Caco-2 (cell line): ENCODE measurements at regions of chr20 and their contacts with region 1.

Region 1: GRCh38 chr20:57596998-57597939 is 23.0 kb downstream of the ZBP1 start:
- DNase-seq: peak; percentile 73 to 91
- H3K4me3 ChIP-seq: no peak overlapping the region
- H3K4me3 Mint-ChIP-seq: no peak overlapping the region
- H3K27ac Mint-ChIP-seq: no peak overlapping the region
- H3K4me1 ChIP-seq: peaks cover 7% of the 10 kb centered on the region; the same call in 1 of the 2 replicates
- H3K4me1 Mint-ChIP-seq: no peaks in the 10 kb centered on the region
- H3K27me3 ChIP-seq: no peaks in the 10 kb centered on the region
- H3K27me3 Mint-ChIP-seq: peaks cover 8% of the 10 kb centered on the region
- CTCF ChIP-seq: peak; percentile 99 to 100

Region 2: GRCh38 chr20:57388953-57389694 is 208.1 kb before region 1 on chr20:
- CTCF ChIA-PET with region 1: no interaction called
- POLR2A ChIA-PET with region 1: no interaction called
- intact Hi-C with region 1: loop called (anchors 10 kb)
- DNase-seq: peak; percentile 94 to 98
- H3K4me3 ChIP-seq: peak overlapping the region; percentile 24
- H3K4me3 Mint-ChIP-seq: peak overlapping the region; percentile 82
- H3K27ac Mint-ChIP-seq: peak overlapping the region; percentile 87
- H3K4me1 ChIP-seq: peaks cover 23% of the 10 kb centered on the region
- H3K4me1 Mint-ChIP-seq: peaks cover 23% of the 10 kb centered on the region
- H3K27me3 ChIP-seq: no peaks in the 10 kb centered on the region
- H3K27me3 Mint-ChIP-seq: no peaks in the 10 kb centered on the region
- CTCF ChIP-seq: peak; percentile 31 to 45

Region 3: GRCh38 chr20:57498425-57499400 is 98.6 kb before region 1 on chr20:
- CTCF ChIA-PET with region 1: interaction called, 14 read pairs
- POLR2A ChIA-PET with region 1: no interaction called
- intact Hi-C with region 1: no loop called
- DNase-seq: peak in 1 of 2 experiments; percentile 65
- H3K4me3 ChIP-seq: no peak overlapping the region
- H3K4me3 Mint-ChIP-seq: no peak overlapping the region
- H3K27ac Mint-ChIP-seq: no peak overlapping the region
- H3K4me1 ChIP-seq: peaks cover 6% of the 10 kb centered on the region; the same call in 1 of the 2 replicates
- H3K4me1 Mint-ChIP-seq: peaks cover 19% of the 10 kb centered on the region
- H3K27me3 ChIP-seq: peaks cover 2% of the 10 kb centered on the region
- H3K27me3 Mint-ChIP-seq: peaks cover 17% of the 10 kb centered on the region
- CTCF ChIP-seq: peak; percentile 43 to 73

Region 4: DNA sequence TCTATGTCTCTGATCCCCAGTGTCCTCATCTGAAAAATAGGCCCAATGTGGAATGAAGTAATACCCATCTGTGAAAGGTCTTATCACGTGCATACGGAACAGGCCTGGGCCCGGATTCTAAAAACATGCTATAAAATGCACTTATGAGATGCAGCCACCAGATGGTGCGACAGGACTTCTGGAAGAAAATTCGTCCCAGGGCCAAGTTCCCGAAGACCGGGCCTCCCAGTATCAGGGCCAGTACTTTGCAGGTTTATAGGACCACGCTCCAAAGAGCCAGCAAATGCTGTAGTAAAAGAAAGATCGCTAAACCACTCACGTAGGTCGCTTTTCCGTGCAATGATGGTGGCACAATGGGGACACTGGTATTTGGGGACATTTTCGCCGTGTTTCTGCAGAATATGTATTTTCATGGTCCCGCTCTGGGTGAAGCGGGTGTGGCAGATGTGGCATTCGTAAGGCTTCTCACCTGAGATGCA is 83.0 kb before region 1 on chr20:
- CTCF ChIA-PET with region 1: interaction called, 14 read pairs
- POLR2A ChIA-PET with region 1: no interaction called
- intact Hi-C with region 1: loop called (anchors 1 kb)
- DNase-seq: peak; percentile 81 to 83
- H3K4me3 ChIP-seq: no peak overlapping the region
- H3K4me3 Mint-ChIP-seq: no peak overlapping the region
- H3K27ac Mint-ChIP-seq: no peak overlapping the region
- H3K4me1 ChIP-seq: no peaks in the 10 kb centered on the region
- H3K4me1 Mint-ChIP-seq: no peaks in the 10 kb centered on the region
- H3K27me3 ChIP-seq: no peaks in the 10 kb centered on the region
- H3K27me3 Mint-ChIP-seq: peaks cover 14% of the 10 kb centered on the region
- CTCF ChIP-seq: peak; percentile 97

Region 5: GRCh38 chr20:57582432-57583305 is 14.6 kb before region 1 on chr20:
- CTCF ChIA-PET with region 1: interaction called, 17 read pairs
- POLR2A ChIA-PET with region 1: no interaction called
- intact Hi-C with region 1: loop called (anchors 1 kb)
- DNase-seq: peak in 1 of 2 experiments; percentile 72
- H3K4me3 ChIP-seq: no peak overlapping the region
- H3K4me3 Mint-ChIP-seq: no peak overlapping the region
- H3K27ac Mint-ChIP-seq: no peak overlapping the region
- H3K4me1 ChIP-seq: no peaks in the 10 kb centered on the region
- H3K4me1 Mint-ChIP-seq: no peaks in the 10 kb centered on the region
- H3K27me3 ChIP-seq: no peaks in the 10 kb centered on the region
- H3K27me3 Mint-ChIP-seq: peaks cover 11% of the 10 kb centered on the region
- CTCF ChIP-seq: peak; percentile 92 to 95

Region 6: DNA sequence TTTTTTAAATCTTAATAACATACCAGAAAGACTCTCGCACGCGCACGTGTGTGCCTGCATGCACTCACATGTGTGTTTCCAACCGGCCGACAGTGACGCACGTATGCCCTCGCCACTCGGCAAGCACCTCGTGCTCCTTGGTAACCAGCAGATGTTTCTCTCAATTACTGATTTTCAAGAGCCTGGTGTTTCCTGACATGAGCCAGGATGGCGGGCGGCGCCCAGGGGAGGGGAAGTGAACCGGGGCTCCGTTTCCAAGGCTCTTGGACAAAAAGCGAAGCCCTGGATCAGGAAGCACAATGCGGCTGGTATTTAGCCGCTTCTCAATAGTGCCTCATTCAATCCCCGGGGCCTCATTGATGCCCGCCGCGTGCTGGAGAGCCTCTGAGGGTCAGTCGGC is 74.9 kb after region 1 on chr20:
- CTCF ChIA-PET with region 1: no interaction called
- POLR2A ChIA-PET with region 1: no interaction called
- intact Hi-C with region 1: no loop called
- DNase-seq: no peak
- H3K4me3 ChIP-seq: no peak overlapping the region
- H3K4me3 Mint-ChIP-seq: no peak overlapping the region
- H3K27ac Mint-ChIP-seq: no peak overlapping the region
- H3K4me1 ChIP-seq: no peaks in the 10 kb centered on the region
- H3K4me1 Mint-ChIP-seq: no peaks in the 10 kb centered on the region
- H3K27me3 ChIP-seq: no peaks in the 10 kb centered on the region
- H3K27me3 Mint-ChIP-seq: no peaks in the 10 kb centered on the region
- CTCF ChIP-seq: no peak

Region 7: GRCh38 chr20:57882451-57883161 is 285.3 kb after region 1 on chr20:
- CTCF ChIA-PET with region 1: no interaction called
- POLR2A ChIA-PET with region 1: no interaction called
- intact Hi-C with region 1: no loop called
- DNase-seq: peak in 1 of 2 experiments; percentile 39
- H3K4me3 ChIP-seq: no peak overlapping the region
- H3K4me3 Mint-ChIP-seq: no peak overlapping the region
- H3K27ac Mint-ChIP-seq: no peak overlapping the region
- H3K4me1 ChIP-seq: no peaks in the 10 kb centered on the region
- H3K4me1 Mint-ChIP-seq: no peaks in the 10 kb centered on the region
- H3K27me3 ChIP-seq: peaks cover 3% of the 10 kb centered on the region
- H3K27me3 Mint-ChIP-seq: peaks cover 34% of the 10 kb centered on the region
- CTCF ChIP-seq: no peak

Region 8: GRCh38 chr20:58087193-58087858 is 490.1 kb after region 1 on chr20:
- CTCF ChIA-PET with region 1: interaction called, 4 read pairs
- POLR2A ChIA-PET with region 1: no interaction called
- intact Hi-C with region 1: loop called (anchors 1 kb)
- DNase-seq: peak; percentile 47 to 64
- H3K4me3 ChIP-seq: no peak overlapping the region
- H3K4me3 Mint-ChIP-seq: no peak overlapping the region
- H3K27ac Mint-ChIP-seq: no peak overlapping the region
- H3K4me1 ChIP-seq: no peaks in the 10 kb centered on the region
- H3K4me1 Mint-ChIP-seq: no peaks in the 10 kb centered on the region
- H3K27me3 ChIP-seq: 0 out of 2 replicates have a peak, but pooled peaks cover 1% of the 10 kb centered on the region
- H3K27me3 Mint-ChIP-seq: peaks cover 25% of the 10 kb centered on the region
- CTCF ChIP-seq: peak; percentile 94 to 97

Region 9: DNA sequence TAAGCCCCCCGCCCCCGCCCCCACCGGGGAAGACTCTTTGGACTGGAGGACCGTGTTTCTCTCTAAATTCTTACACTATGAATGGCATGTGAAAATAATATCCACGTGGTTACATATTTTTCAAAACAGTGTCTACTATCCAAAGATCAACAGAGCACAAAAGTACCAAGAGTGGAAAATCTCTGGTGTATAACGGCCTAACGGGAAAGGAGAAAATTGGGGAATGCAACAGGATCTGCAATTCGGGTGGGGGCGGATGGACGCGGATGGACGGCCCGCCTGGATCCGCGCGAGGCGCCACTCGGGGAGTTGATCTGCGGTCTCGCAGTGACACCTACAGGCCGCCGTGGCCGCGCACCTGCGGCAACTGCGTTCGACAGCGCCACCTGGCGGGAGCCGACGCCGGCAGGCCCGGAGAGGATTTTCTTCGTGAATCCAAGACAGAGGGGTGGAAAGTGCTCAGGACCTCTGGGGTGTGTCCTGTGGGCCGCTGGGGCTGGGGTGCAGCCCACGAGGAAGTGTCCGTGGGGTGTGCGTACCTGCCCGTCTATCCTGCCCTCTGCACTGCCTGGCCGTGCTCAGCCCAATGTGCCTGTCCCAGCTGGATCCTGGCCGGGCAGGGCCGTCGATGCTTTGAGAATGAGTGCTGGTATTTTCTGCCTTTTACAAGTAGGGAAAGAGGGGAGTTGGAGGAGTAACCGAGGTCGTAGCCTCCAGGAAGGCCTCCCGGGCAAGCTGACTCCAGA is 612.6 kb after region 1 on chr20:
- CTCF ChIA-PET with region 1: interaction called, 10 read pairs
- POLR2A ChIA-PET with region 1: no interaction called
- intact Hi-C with region 1: loop called (anchors 1 kb)
- DNase-seq: peak; percentile 86 to 95
- H3K4me3 ChIP-seq: no peak overlapping the region
- H3K4me3 Mint-ChIP-seq: no peak overlapping the region
- H3K27ac Mint-ChIP-seq: no peak overlapping the region
- H3K4me1 ChIP-seq: no peaks in the 10 kb centered on the region
- H3K4me1 Mint-ChIP-seq: no peaks in the 10 kb centered on the region
- H3K27me3 ChIP-seq: peaks cover 2% of the 10 kb centered on the region
- H3K27me3 Mint-ChIP-seq: peaks cover 38% of the 10 kb centered on the region
- CTCF ChIP-seq: peak; percentile 100